ENCODE measurements at regions of chr4 and their contacts with region 1.

Region 1: GRCh38 chr4:165621983-165622382 is 243.2 kb downstream of the CPE start:
- DNase-seq: peak; percentile 87
- H3K4me3 ChIP-seq: no peak overlapping the region
- H3K27ac ChIP-seq: peak overlapping the region; percentile 86
- H3K4me1 ChIP-seq: peaks cover 45% of the 10 kb centered on the region
- H3K27me3 ChIP-seq: no peaks in the 10 kb centered on the region
- CTCF ChIP-seq: no peak
- POLR2A ChIP-seq: no peak

Region 2: GRCh38 chr4:165556383-165556782 is 65.6 kb before region 1 on chr4:
- CTCF ChIA-PET with region 1: no interaction called
- POLR2A ChIA-PET with region 1: no interaction called
- dilution Hi-C with region 1: no loop called
- intact Hi-C with region 1: loop called (anchors 1 kb)
- DNase-seq: peak; percentile 31
- H3K4me3 ChIP-seq: no peak overlapping the region
- H3K27ac ChIP-seq: no peak overlapping the region
- H3K4me1 ChIP-seq: peaks cover 15% of the 10 kb centered on the region
- H3K27me3 ChIP-seq: no peaks in the 10 kb centered on the region
- CTCF ChIP-seq: no peak
- POLR2A ChIP-seq: no peak

Region 3: DNA sequence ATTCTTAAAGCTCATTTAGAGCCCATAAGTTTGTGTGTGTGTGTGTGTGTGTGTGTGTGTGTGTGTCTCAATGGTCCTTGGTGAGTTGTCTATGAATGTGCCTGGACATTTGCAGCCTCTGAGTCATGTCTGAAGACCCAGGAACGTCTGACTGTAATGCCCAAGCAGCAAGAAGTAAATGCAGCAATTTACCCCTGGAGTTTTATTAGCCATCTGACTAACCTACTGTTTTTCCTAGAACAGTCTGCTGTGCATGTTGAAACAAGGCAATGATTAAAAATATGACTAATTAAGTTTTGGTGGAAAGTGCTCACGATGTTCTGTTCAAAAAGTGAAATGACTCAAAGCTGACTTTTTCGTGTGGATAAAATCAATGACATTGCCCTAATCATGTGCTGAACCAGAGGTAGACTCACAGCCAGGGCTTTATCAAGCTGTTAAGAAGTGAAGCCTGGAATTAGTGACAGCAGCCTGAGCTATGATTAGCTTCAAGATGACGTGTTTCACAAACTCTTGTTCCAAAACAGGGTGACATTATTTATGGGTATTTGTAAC is 41.6 kb before region 1 on chr4:
- CTCF ChIA-PET with region 1: no interaction called
- POLR2A ChIA-PET with region 1: no interaction called
- dilution Hi-C with region 1: no loop called
- intact Hi-C with region 1: loop called (anchors 2 kb)
- DNase-seq: peak; percentile 85
- H3K4me3 ChIP-seq: no peak overlapping the region
- H3K27ac ChIP-seq: peak overlapping the region; percentile 91
- H3K4me1 ChIP-seq: peaks cover 20% of the 10 kb centered on the region
- H3K27me3 ChIP-seq: no peaks in the 10 kb centered on the region
- CTCF ChIP-seq: no peak
- POLR2A ChIP-seq: no peak

Region 4: GRCh38 chr4:165592386-165592785 is 29.6 kb before region 1 on chr4:
- CTCF ChIA-PET with region 1: no interaction called
- POLR2A ChIA-PET with region 1: no interaction called
- dilution Hi-C with region 1: no loop called
- intact Hi-C with region 1: no loop called
- DNase-seq: no peak
- H3K4me3 ChIP-seq: no peak overlapping the region
- H3K27ac ChIP-seq: no peak overlapping the region
- H3K4me1 ChIP-seq: peaks cover 7% of the 10 kb centered on the region
- H3K27me3 ChIP-seq: no peaks in the 10 kb centered on the region
- CTCF ChIP-seq: no peak
- POLR2A ChIP-seq: no peak

Region 5: GRCh38 chr4:165740911-165741310 is 118.9 kb after region 1 on chr4:
- CTCF ChIA-PET with region 1: no interaction called
- POLR2A ChIA-PET with region 1: no interaction called
- dilution Hi-C with region 1: no loop called
- intact Hi-C with region 1: loop called (anchors 1 kb)
- DNase-seq: peak; percentile 76
- H3K4me3 ChIP-seq: peak overlapping the region in 1 of 3 experiments; percentile 14
- H3K27ac ChIP-seq: peak overlapping the region; percentile 0
- H3K4me1 ChIP-seq: peaks cover 25% of the 10 kb centered on the region
- H3K27me3 ChIP-seq: no peaks in the 10 kb centered on the region
- CTCF ChIP-seq: no peak
- POLR2A ChIP-seq: peak; percentile 81

Region 6: GRCh38 chr4:165765053-165765452 is 143.1 kb after region 1 on chr4:
- CTCF ChIA-PET with region 1: no interaction called
- POLR2A ChIA-PET with region 1: no interaction called
- dilution Hi-C with region 1: no loop called
- intact Hi-C with region 1: loop called (anchors 1 kb)
- DNase-seq: peak; percentile 30
- H3K4me3 ChIP-seq: no peak overlapping the region
- H3K27ac ChIP-seq: no peak overlapping the region
- H3K4me1 ChIP-seq: peaks cover 39% of the 10 kb centered on the region
- H3K27me3 ChIP-seq: no peaks in the 10 kb centered on the region
- CTCF ChIP-seq: no peak
- POLR2A ChIP-seq: no peak

Measured in endothelial cell of umbilical vein (primary cell).